Breast epithelium (tissue), 4 donors: ENCODE measurements at regions of chr15 and their contacts with region 1.

Region 1: DNA sequence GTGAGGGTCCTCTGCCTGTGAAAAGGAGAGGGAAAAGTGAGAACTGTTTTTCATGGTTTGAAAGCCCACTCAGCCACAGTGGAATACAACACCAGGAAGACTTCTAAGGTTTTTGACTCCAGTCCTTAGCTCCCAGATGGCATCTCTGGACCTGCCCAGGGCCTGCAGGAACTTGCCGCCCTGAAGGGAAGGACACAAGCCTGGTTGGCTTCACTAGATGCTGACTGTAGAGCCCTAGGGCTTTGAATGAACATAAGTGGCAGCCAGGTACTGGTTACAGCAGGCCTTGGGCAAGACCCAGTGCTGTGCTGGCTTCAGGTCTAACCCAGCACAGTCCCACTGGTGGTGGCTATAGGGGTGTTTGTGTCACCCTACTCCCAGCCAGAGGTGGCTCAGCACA is 21.3 kb upstream of the TMEM266 start:
- DNase-seq: no peak
- H3K4me3 ChIP-seq: no peak overlapping the region
- H3K27ac ChIP-seq: no peak overlapping the region
- H3K4me1 ChIP-seq: no peaks in the 10 kb centered on the region
- H3K27me3 ChIP-seq: no peaks in the 10 kb centered on the region
- CTCF ChIP-seq: no peak
- POLR2A ChIP-seq: no peak

Region 2: DNA sequence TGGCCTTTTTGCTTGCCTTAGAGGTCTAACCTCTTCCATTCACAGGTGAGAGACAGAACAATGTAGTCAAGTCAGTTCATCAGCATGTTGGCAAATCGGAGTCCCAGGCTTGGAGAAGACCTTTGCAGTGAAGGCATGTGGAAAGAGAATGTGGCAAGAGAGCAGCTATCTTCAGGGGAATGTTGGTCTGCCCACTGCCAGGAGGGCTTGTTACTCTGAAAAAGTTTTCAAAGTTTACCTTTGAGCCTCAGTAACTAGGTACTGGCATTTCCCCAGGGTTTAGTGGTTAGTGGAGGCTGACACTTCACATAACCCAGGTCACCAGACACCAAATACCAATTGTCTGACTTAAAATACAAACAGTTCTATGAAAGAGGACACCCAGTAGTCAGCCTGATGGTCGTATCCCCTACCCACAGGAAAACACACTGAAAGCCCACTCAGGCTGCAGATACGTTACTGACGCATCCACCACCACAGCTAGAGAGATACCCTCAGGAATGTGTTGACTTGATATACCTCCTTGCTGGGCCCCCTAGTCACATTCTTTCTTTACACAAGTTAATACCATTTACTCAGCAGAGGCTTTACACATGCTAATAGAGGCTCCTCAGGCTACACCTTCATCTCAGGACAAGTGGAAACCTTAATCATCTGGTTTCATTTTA is 1507.2 kb before region 1 on chr15:
- intact Hi-C with region 1: loop called (anchors 10 kb)
- DNase-seq: no peak
- H3K4me3 ChIP-seq: no peak overlapping the region
- H3K27ac ChIP-seq: no peak overlapping the region
- H3K4me1 ChIP-seq: no peaks in the 10 kb centered on the region
- H3K27me3 ChIP-seq: no peaks in the 10 kb centered on the region
- CTCF ChIP-seq: no peak
- POLR2A ChIP-seq: no peak

Region 3: GRCh38 chr15:76024021-76024768 is 14.3 kb before region 1 on chr15:
- intact Hi-C with region 1: no loop called
- DNase-seq: no peak
- H3K4me3 ChIP-seq: no peak overlapping the region
- H3K27ac ChIP-seq: no peak overlapping the region
- H3K4me1 ChIP-seq: no peaks in the 10 kb centered on the region
- H3K27me3 ChIP-seq: no peaks in the 10 kb centered on the region
- CTCF ChIP-seq: no peak
- POLR2A ChIP-seq: no peak

Region 4: GRCh38 chr15:76065267-76065666 is 26.8 kb after region 1 on chr15:
- intact Hi-C with region 1: no loop called
- DNase-seq: no peak
- H3K4me3 ChIP-seq: no peak overlapping the region
- H3K27ac ChIP-seq: no peak overlapping the region
- H3K4me1 ChIP-seq: no peaks in the 10 kb centered on the region
- H3K27me3 ChIP-seq: no peaks in the 10 kb centered on the region
- CTCF ChIP-seq: no peak
- POLR2A ChIP-seq: no peak

Region 5: GRCh38 chr15:76368122-76368589 is 329.6 kb after region 1 on chr15:
- intact Hi-C with region 1: no loop called
- DNase-seq: no peak
- H3K4me3 ChIP-seq: no peak overlapping the region
- H3K27ac ChIP-seq: no peak overlapping the region
- H3K4me1 ChIP-seq: no peaks in the 10 kb centered on the region
- H3K27me3 ChIP-seq: no peaks in the 10 kb centered on the region
- CTCF ChIP-seq: no peak
- POLR2A ChIP-seq: no peak